Mammary epithelial cell (primary cell): ENCODE measurements at regions of chr15 and their contacts with region 1.

Region 1: DNA sequence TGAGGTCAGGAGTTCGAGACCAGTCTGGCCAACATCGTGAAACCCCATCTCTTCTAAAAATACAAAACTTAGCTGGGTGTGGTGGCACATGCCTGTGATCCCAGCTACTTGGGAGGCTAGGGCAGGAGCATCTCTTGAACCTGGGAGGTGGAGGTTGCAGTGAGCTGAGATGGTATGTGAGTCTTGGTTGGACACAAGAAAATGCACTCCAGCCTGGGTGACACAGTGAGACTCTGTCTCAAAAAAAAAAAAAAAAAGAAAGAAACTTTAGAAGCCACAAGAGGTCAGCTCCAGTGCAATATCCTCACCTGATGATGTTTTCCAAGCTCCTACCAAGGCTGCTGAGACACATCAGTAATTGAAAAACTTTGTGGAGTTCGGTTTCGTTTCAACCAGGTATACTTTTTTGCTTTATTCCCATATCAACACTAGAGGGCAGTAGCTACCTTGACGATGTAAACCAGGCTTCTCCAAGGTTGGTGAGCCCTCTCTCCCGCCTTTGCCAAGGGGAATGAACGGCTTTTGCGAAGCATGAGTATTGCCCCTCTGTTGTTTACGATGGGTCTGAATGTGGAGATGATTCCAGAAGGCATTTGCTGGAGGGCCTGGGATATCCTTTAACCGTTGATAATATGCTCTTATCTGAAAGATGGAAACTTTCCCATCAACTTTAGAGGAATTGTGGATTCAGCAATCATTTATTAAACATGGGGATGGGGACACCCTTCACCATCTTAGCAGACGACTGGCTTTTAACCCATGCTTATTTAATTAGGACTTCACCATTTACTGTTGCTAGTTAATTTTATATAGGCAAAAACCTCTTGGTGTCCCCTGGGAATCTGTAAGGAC is 202.8 kb downstream of the SV2B start:
- DNase-seq: peak; percentile 57
- H3K4me3 ChIP-seq: no peak overlapping the region
- H3K27ac ChIP-seq: no peak overlapping the region
- H3K4me1 ChIP-seq: no peaks in the 10 kb centered on the region
- H3K27me3 ChIP-seq: peaks cover 3% of the 10 kb centered on the region
- CTCF ChIP-seq: peak; percentile 62 to 79

Region 2: GRCh38 chr15:91393186-91393585 is 90.4 kb after region 1 on chr15:
- CTCF ChIA-PET with region 1: no interaction called
- dilution Hi-C with region 1: no loop called
- in situ Hi-C with region 1: no loop called
- intact Hi-C with region 1: no loop called
- DNase-seq: no peak
- H3K4me3 ChIP-seq: no peak overlapping the region
- H3K27ac ChIP-seq: no peak overlapping the region
- H3K4me1 ChIP-seq: no peaks in the 10 kb centered on the region
- H3K27me3 ChIP-seq: no peaks in the 10 kb centered on the region
- CTCF ChIP-seq: no peak

Region 3: DNA sequence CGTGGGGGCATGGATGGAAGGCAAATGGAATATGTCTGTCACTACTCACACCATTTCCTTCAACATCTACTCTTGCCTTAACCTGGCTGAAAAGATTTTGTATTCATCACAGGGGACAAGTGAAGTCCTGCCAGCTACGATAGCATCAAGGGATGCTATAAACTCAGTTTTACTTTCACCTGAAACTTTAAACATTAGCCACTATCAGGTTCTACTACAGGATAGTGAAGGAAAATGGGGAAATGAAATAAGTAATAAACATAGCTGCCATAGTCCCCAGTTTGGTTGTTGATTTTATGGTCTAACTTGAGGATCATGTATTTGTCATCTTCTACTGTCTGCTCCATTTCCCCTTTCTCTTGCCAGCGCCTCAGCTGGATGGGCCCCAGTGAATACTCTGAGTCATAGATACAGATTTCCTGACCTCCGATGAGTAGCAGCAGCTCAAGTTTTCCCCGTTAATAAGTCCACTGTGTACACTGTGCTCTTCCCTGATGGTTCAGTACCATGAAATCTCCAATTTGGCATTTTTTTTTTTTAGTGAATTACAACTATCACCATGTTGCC is 212.5 kb after region 1 on chr15:
- CTCF ChIA-PET with region 1: no interaction called
- dilution Hi-C with region 1: no loop called
- in situ Hi-C with region 1: loop called (anchors 5 to 10 kb)
- intact Hi-C with region 1: no loop called
- DNase-seq: peak; percentile 90
- H3K4me3 ChIP-seq: no peak overlapping the region
- H3K27ac ChIP-seq: no peak overlapping the region
- H3K4me1 ChIP-seq: no peaks in the 10 kb centered on the region
- H3K27me3 ChIP-seq: no peaks in the 10 kb centered on the region
- CTCF ChIP-seq: no peak

Region 4: DNA sequence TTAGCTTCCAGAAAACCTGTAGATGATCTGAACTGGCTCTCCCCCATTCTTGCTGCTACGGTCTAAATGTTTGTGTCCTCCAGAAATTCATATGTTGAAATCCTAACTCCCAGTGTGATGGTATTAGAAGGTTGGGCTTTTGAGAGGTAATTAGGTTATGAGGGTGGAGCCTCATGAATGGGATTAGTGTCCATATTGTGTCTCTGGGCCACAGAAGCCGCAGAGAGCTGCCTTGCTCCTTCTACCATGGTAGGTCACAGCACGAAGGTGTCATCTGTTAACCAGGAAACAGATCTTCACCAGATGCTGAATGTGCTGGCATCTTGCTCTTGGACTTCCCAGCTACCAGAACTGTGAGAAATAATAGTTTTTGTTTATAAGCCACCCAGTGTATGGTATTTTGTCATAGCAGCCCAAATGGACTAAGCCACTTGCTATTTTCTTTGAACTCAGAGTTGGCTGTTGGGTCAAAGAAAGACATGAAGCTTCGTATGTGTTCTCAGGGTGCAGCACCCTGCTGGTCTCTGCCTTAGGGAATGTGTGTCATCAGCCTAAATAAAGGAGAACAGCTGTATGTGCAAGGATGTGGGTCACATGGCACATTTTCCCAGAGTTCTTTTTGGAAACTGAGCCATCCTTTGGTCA is 233.2 kb after region 1 on chr15:
- CTCF ChIA-PET with region 1: no interaction called
- dilution Hi-C with region 1: loop called (anchors 25 kb)
- in situ Hi-C with region 1: no loop called
- intact Hi-C with region 1: no loop called
- DNase-seq: peak; percentile 43
- H3K4me3 ChIP-seq: no peak overlapping the region
- H3K27ac ChIP-seq: no peak overlapping the region
- H3K4me1 ChIP-seq: peaks cover 10% of the 10 kb centered on the region
- H3K27me3 ChIP-seq: no peaks in the 10 kb centered on the region
- CTCF ChIP-seq: no peak

Region 5: DNA sequence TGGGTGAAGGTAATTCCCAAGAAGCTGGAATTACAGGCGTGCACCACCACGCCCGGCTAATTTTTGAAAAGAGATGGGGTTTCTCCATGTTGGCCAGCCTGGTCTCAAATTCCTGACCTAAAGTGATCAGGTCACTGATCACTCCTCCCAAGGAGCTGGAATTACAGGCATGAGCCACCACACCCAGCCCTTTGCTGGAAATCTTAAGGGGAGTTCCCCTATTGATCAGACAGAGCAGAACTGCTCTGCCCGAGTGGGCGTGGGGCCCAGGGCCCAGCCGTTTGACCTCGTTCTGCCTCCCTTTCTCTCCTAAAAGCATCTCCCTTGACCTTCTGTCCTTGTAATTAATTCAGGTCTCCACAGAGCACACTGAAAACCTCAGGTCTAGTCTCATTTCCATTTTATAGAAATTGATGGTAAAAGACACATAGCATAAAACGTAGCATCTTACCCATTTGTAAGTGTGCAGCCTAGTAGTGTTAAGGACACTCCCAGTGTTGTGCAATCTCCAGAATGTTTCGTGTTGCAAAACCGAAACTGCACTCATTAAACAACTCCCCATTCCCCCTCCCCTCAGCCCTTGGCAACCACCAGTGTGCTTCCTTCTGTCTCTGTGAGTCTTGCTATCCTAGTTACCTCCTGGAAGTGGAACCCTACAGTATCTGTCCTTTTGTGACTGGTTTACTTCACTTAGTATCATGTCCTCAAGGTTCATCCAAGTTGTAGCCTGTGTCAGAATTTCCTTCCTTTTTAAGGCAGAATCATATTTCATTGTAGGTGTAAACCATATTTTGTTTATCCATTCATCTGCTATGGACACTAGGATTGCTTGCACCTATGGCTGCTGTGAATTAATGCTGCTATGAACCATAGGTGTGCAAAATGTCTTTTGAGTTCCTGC is 640.1 kb after region 1 on chr15:
- CTCF ChIA-PET with region 1: no interaction called
- dilution Hi-C with region 1: no loop called
- in situ Hi-C with region 1: no loop called
- intact Hi-C with region 1: loop called (anchors 1 kb)
- DNase-seq: peak; percentile 99
- H3K4me3 ChIP-seq: peak overlapping the region in 1 of 3 experiments; percentile 5
- H3K27ac ChIP-seq: peak overlapping the region; percentile 96
- H3K4me1 ChIP-seq: peaks cover 58% of the 10 kb centered on the region
- H3K27me3 ChIP-seq: no peaks in the 10 kb centered on the region
- CTCF ChIP-seq: no peak

Region 6: GRCh38 chr15:91981821-91982801 is 679.3 kb after region 1 on chr15:
- CTCF ChIA-PET with region 1: no interaction called
- dilution Hi-C with region 1: no loop called
- in situ Hi-C with region 1: no loop called
- intact Hi-C with region 1: loop called (anchors 2 kb)
- DNase-seq: no peak
- H3K4me3 ChIP-seq: no peak overlapping the region
- H3K27ac ChIP-seq: no peak overlapping the region
- H3K4me1 ChIP-seq: peaks cover 9% of the 10 kb centered on the region
- H3K27me3 ChIP-seq: no peaks in the 10 kb centered on the region
- CTCF ChIP-seq: peak; percentile 29 to 62

Region 7: DNA sequence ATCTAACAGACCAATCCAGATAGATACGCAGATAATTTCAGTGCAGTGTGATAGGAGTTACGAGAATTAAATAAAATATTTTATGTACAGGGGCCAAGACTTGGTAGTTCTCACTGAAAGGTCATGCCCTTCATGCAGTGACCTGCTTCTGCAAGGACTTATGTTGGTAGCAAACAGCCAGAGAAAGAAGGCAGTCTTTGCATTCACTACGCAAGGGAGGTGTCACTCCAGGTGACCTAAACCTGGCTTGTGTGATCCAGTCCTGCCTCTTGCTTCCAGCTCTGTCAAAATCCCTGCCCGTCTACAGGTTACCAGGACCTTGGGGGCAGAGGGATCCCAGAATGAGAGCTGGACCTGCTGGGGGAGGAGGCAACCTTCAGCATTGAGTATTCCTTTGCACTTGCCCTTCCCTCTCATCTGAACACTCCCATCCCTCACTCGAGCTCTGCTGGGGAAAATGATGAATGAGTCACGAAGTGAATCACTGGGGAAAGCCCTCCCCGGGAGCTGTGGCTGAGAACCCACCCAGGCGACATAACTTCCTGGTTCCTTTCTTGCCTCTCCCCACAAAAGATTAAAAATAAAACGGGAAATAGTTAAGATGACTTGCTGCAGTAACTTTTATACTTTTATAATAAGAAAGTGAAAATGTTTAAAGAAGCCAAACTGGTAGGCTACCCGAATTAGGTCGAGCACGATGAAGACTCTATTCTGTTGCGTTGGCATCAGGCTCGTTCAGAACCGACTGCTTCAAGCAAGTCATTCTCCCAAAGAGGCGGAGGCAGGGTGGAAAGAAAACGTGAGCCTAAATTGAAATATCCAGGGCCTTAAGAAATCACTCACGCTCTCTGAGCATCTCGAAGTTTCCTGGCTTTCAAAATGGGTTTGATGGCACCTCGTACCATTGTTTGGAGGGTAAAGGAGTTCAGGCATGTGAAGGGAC is 766.8 kb after region 1 on chr15:
- CTCF ChIA-PET with region 1: no interaction called
- dilution Hi-C with region 1: no loop called
- in situ Hi-C with region 1: loop called (anchors 10 to 25 kb)
- intact Hi-C with region 1: no loop called
- DNase-seq: peak; percentile 94
- H3K4me3 ChIP-seq: no peak overlapping the region
- H3K27ac ChIP-seq: peak overlapping the region; percentile 45
- H3K4me1 ChIP-seq: peaks cover 16% of the 10 kb centered on the region
- H3K27me3 ChIP-seq: no peaks in the 10 kb centered on the region
- CTCF ChIP-seq: no peak